Mammary epithelial cell (primary cell): ENCODE measurements at regions of chr2 and their contacts with region 1.

Region 1: DNA sequence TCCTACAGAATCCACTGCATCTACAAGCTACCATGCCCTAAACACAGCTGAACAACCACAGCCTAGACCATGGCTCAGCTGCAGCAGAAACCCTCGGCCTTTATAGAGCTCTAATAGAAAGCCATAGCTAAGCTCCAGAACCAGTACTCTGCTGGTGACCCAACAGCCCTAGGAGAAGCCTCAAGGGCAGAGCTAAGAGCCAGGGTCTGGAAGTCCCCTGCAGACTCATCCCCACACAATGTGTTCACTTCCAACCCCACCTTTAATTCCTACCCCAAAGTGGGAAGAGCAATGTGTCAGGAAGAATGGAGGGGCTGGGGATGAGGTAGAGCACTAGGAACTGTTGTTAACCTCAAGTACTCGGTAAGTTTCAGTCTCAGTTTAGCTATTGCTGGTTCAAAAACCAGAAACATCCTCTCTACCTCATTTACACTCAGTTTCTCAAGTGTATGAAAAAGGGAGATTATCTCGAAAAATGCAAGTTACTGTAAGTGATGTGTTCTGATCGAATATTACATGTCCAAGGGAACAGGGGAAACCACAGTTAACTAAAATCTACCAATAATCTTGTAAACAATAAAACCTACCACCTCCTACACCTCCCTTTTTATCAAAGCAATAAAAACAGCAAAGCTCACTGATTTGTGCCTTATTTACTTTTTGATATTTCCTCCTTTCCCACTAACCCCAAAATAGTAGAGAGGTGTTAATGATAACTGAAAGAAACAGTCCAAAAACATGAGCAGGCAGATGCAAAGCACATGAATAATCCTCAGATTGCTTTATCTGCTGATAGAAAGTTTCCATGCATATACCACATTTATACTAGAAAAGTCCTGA is 36.2 kb downstream of the THADA start:
- DNase-seq: no peak
- H3K4me3 ChIP-seq: no peak overlapping the region
- H3K27ac ChIP-seq: no peak overlapping the region
- H3K4me1 ChIP-seq: no peaks in the 10 kb centered on the region
- H3K27me3 ChIP-seq: no peaks in the 10 kb centered on the region
- CTCF ChIP-seq: no peak

Region 2: DNA sequence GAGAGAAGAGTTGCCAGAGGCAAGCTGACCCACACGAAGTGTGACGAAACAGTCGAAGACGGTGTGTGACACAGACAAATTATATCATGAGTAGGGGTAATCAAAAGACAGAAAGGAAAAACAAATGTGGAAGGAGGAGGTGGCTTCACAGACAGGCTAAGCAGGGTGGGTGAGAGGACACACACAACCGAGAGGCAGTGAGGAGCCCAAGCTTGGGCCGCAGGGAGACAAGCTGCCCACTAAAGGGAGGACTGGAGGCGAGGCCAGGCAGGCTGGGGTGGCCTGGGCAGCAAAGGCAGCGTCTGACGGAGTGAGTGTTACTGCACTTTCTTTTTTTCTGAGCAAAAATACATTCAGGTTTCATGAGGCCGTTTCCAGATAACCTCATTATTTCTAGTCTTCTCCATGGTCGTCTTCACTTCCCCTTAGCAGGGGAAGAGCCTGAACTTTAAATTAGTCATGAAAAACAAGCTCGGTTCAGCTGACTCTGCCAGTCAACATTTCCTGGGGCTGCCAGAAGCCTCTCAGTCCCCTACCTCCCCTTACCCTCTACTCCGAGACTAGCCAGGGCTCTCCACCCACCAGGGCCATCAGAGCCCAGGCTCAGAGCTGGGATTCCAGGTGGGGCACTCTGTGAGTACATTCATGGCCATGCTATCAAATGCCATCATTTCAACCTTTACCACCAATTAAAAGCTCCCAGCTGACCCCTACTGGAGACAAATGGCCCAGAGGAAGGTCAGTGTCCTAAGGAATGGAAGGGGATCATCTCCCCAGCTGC is 319.4 kb before region 1 on chr2:
- CTCF ChIA-PET with region 1: no interaction called
- dilution Hi-C with region 1: no loop called
- in situ Hi-C with region 1: loop called in 1 of 2 experiments (anchors 10 kb)
- intact Hi-C with region 1: no loop called
- DNase-seq: no peak
- H3K4me3 ChIP-seq: no peak overlapping the region
- H3K27ac ChIP-seq: no peak overlapping the region
- H3K4me1 ChIP-seq: no peaks in the 10 kb centered on the region
- H3K27me3 ChIP-seq: no peaks in the 10 kb centered on the region
- CTCF ChIP-seq: peak in 1 of 2 donors; percentile 18

Region 3: GRCh38 chr2:43519643-43520221 is 39.9 kb before region 1 on chr2:
- CTCF ChIA-PET with region 1: no interaction called
- dilution Hi-C with region 1: no loop called
- in situ Hi-C with region 1: no loop called
- intact Hi-C with region 1: no loop called
- DNase-seq: peak; percentile 94
- H3K4me3 ChIP-seq: no peak overlapping the region
- H3K27ac ChIP-seq: peak overlapping the region; percentile 81
- H3K4me1 ChIP-seq: peaks cover 33% of the 10 kb centered on the region
- H3K27me3 ChIP-seq: no peaks in the 10 kb centered on the region
- CTCF ChIP-seq: no peak